ENCODE measurements at regions of chr10 and their contacts with region 1.

Region 1: GRCh38 chr10:68074775-68075549 is at the start of gene HERC4:
- DNase-seq: peak; percentile 91
- ATAC-seq: peak; percentile 92
- H3K4me3 Mint-ChIP-seq: peak within 1 kb of the TSS; percentile 97
- H3K27ac Mint-ChIP-seq: peak within 1 kb of the TSS; percentile 97
- H3K4me1 Mint-ChIP-seq: peaks cover 39% of the 10 kb centered on the region
- H3K27me3 Mint-ChIP-seq: no peaks in the 10 kb centered on the region
- CTCF ChIP-seq: no peak
- total RNA-seq, gene HERC4: 65.3 and 84.2 TPM in 2 replicates

Region 2: DNA sequence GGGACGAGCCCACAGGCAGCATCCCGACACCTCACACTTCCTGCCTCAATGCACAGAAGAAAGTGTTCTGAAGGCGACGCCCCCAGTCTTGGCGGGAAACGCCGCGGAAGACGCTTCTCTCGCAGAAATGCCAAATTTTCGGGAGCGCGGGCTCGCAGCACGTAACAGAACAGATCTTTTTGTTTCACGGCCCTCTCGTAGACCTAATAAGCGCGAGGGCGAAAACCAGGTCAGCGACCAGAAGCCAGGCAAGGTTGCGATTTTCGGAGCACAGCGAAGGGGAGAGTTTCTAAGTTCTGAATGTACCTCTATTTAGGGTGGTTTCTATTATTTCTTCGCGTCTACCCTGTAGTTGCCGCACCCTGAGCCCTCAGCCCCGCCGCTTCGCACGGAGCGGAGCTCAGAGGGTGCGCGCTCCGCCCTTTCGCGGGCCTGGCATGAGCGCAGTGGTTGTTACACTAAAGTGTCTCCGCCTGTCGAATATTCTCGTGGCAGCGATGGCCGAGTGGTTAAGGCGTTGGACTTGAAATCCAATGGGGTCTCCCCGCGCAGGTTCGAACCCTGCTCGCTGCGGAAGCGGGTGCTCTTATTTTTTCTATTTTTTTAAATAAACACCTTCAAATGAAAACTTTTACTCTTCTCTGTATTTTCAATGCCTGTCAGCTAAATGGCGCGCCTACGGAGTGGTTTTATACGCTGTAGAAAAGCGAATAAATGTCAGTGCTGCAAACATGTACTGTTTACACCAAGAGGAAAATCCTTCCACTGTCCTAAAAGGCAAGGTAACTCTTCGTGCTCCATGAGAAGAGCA is 310.7 kb before region 1 on chr10:
- CTCF ChIA-PET with region 1: no interaction called
- POLR2A ChIA-PET with region 1: no interaction called
- intact Hi-C with region 1: loop called (anchors 1 kb)
- DNase-seq: peak; percentile 98
- ATAC-seq: peak; percentile 78
- H3K4me3 Mint-ChIP-seq: peak overlapping the region; percentile 94
- H3K27ac Mint-ChIP-seq: peak overlapping the region; percentile 99
- H3K4me1 Mint-ChIP-seq: peaks cover 31% of the 10 kb centered on the region
- H3K27me3 Mint-ChIP-seq: peaks cover 4% of the 10 kb centered on the region
- CTCF ChIP-seq: no peak

Region 3: DNA sequence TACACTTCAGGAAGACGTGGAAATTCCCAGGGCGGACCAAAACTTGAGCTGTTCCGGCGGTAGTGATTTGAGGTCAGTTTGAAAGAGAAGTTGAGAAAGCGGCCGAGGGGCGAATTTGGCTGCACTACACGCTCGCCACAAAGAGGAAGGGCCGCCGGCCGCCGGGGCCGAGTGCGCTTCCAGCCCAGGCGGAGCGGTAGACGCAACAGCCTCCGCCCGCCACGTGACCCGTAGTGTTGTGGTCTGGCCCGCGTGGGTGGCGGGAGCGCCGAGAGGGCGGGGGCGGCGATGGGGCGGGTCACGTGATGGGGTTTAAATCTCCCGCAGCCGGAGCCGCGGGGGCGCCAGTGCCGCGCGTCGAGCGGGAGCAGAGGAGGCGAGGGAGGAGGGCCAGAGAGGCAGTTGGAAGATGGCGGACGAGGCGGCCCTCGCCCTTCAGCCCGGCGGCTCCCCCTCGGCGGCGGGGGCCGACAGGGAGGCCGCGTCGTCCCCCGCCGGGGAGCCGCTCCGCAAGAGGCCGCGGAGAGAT is 190.6 kb before region 1 on chr10 and contains the start of gene SIRT1:
- CTCF ChIA-PET with region 1: interaction called, 3 read pairs
- POLR2A ChIA-PET with region 1: interaction called, 6 read pairs
- intact Hi-C with region 1: loop called (anchors 1 kb)
- DNase-seq: peak; percentile 97
- ATAC-seq: peak; percentile 81
- H3K4me3 Mint-ChIP-seq: peak within 1 kb of the TSS; percentile 92
- H3K27ac Mint-ChIP-seq: peak within 1 kb of the TSS; percentile 96
- H3K4me1 Mint-ChIP-seq: peaks cover 31% of the 10 kb centered on the region
- H3K27me3 Mint-ChIP-seq: no peaks in the 10 kb centered on the region
- CTCF ChIP-seq: no peak
- total RNA-seq, gene SIRT1: 30.1 and 31.6 TPM in 2 replicates

Region 4: GRCh38 chr10:67988606-67989005 is 86.4 kb before region 1 on chr10:
- CTCF ChIA-PET with region 1: no interaction called
- POLR2A ChIA-PET with region 1: no interaction called
- intact Hi-C with region 1: loop called (anchors 5 kb)
- DNase-seq: no peak
- ATAC-seq: no peak
- H3K4me3 Mint-ChIP-seq: no peak overlapping the region
- H3K27ac Mint-ChIP-seq: no peak overlapping the region
- H3K4me1 Mint-ChIP-seq: peaks cover 11% of the 10 kb centered on the region
- H3K27me3 Mint-ChIP-seq: no peaks in the 10 kb centered on the region
- CTCF ChIP-seq: no peak

Region 5: DNA sequence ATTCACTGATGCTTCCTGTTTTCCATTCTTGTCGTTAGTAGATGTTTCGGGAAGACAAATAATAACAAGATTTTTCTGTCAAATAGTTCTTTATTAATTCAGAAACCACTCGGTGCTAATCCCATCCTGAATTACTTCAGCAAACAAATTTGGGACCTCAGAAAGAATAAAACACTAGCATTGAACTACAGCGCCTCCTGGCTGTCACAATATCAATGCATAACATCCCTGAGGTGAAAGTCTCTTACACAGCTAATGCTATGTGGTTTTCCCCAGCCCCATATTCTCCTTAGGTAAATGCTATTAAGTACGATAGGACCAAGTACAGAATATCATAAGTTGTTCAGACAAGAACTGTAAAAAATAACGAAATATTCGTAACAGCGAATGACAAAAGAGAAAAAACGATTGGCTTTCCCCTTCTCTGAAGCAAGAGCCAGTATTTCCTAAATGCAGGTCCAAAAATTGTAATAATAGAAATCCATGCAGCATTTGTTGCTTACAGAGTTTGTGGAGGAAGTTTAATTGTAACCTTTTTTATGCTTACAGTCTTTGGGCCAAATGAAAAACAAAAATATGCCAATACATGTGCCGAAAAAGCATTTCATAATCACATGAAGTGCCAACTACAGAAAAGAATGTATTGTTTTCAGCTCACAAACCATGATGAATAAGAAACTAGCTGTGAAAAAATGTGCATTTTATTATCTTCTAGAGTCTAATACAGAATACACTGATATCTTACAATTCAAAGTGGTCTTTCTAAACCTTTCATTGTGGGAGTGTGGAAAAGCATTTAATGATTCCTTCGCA is 81.6 kb after region 1 on chr10:
- CTCF ChIA-PET with region 1: no interaction called
- POLR2A ChIA-PET with region 1: no interaction called
- intact Hi-C with region 1: loop called (anchors 5 kb)
- DNase-seq: no peak
- ATAC-seq: peak; percentile 61
- H3K4me3 Mint-ChIP-seq: no peak overlapping the region
- H3K27ac Mint-ChIP-seq: no peak overlapping the region
- H3K4me1 Mint-ChIP-seq: no peaks in the 10 kb centered on the region
- H3K27me3 Mint-ChIP-seq: peaks cover 5% of the 10 kb centered on the region
- CTCF ChIP-seq: no peak

Region 6: GRCh38 chr10:68223535-68224165 is 148.7 kb after region 1 on chr10:
- CTCF ChIA-PET with region 1: no interaction called
- POLR2A ChIA-PET with region 1: no interaction called
- intact Hi-C with region 1: no loop called
- DNase-seq: no peak
- ATAC-seq: no peak
- H3K4me3 Mint-ChIP-seq: no peak overlapping the region
- H3K27ac Mint-ChIP-seq: no peak overlapping the region
- H3K4me1 Mint-ChIP-seq: no peaks in the 10 kb centered on the region
- H3K27me3 Mint-ChIP-seq: peaks cover 9% of the 10 kb centered on the region
- CTCF ChIP-seq: no peak

Region 7: DNA sequence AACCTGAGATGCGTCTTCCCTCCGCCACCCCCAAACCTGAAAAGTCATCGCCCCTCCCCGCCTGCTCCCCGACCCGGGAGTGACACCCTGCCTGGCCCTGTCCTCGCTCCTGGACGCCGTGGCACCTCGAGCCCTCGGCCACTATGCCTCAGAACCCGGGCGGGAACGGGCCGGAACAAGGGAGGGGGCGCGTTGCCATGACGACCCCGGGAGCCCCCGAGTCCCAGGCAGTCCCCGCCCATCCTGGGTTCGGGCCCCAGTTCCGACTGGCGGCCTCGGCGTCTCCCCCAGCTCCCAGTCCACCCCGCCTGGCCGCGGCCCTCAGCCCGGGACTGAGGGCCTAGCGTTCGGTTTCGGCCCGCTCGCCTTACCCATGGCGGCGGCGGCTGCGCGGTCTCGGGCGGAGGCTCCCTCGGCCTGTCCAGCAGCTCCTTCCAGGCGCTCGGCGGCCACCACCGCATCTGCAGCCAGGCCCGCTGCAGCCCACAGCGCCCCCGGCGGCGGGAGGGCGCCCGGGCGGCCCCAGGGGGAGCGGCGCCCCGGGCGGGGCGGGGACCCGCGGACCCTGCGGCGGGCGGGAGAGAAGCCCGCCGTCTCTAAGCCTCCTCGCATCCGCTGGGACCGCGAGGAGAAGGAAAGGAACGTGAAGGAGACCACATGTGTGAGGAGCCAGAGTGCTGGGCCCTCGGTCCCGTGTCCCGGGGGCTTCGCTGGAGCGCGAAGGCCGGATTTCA is 332.0 kb after region 1 on chr10 and contains the start of gene RUFY2:
- CTCF ChIA-PET with region 1: no interaction called
- POLR2A ChIA-PET with region 1: interaction called, 6 read pairs
- intact Hi-C with region 1: loop called (anchors 2 kb)
- DNase-seq: peak; percentile 91
- ATAC-seq: peak; percentile 92
- H3K4me3 Mint-ChIP-seq: peak within 1 kb of the TSS; percentile 92
- H3K27ac Mint-ChIP-seq: peak within 1 kb of the TSS; percentile 85
- H3K4me1 Mint-ChIP-seq: peaks cover 15% of the 10 kb centered on the region
- H3K27me3 Mint-ChIP-seq: no peaks in the 10 kb centered on the region
- CTCF ChIP-seq: no peak
- total RNA-seq, gene RUFY2: 23.1 and 28.5 TPM in 2 replicates

Region 8: GRCh38 chr10:68720793-68721672 is 646.1 kb after region 1 on chr10 and contains the start of gene CCAR1:
- CTCF ChIA-PET with region 1: no interaction called
- POLR2A ChIA-PET with region 1: interaction called, 3 read pairs
- intact Hi-C with region 1: loop called (anchors 1 kb)
- DNase-seq: peak; percentile 93
- ATAC-seq: peak; percentile 98
- H3K4me3 Mint-ChIP-seq: peak within 1 kb of the TSS; percentile 92
- H3K27ac Mint-ChIP-seq: peak within 1 kb of the TSS; percentile 98
- H3K4me1 Mint-ChIP-seq: peaks cover 14% of the 10 kb centered on the region
- H3K27me3 Mint-ChIP-seq: no peaks in the 10 kb centered on the region
- CTCF ChIP-seq: no peak
- total RNA-seq, gene CCAR1: 88.2 and 98.8 TPM in 2 replicates

Measured in activated B cell treated with CpG ODN at 0.5 μM for 24 hours (primary cell).